ENCODE measurements at regions of chr12 and their contacts with region 1.

Region 1: GRCh38 chr12:113239811-113240331 is 18.6 kb downstream of the TPCN1 start:
- DNase-seq: peak; percentile 82
- H3K4me3 ChIP-seq: peak overlapping the region in 1 of 4 donors; percentile 13
- H3K27ac ChIP-seq: peak overlapping the region; percentile 92 to 95 (median 93)
- H3K4me1 ChIP-seq: peaks cover 38 to 99% (median 86%) of the 10 kb centered on the region in 4 donors
- H3K27me3 ChIP-seq: no peaks in the 10 kb centered on the region
- CTCF ChIP-seq: no peak
- EP300 ChIP-seq: peak; percentile 23
- POLR2A ChIP-seq: peak; percentile 79

Region 2: GRCh38 chr12:112988224-112988623 is 251.6 kb before region 1 on chr12:
- in situ Hi-C with region 1: no loop called
- intact Hi-C with region 1: no loop called
- DNase-seq: no peak
- H3K4me3 ChIP-seq: no peak overlapping the region
- H3K27ac ChIP-seq: no peak overlapping the region
- H3K4me1 ChIP-seq: peaks cover 0 to 3% (median 0%) of the 10 kb centered on the region in 4 donors
- H3K27me3 ChIP-seq: no peaks in the 10 kb centered on the region
- CTCF ChIP-seq: no peak
- EP300 ChIP-seq: no peak
- POLR2A ChIP-seq: no peak

Region 3: GRCh38 chr12:113130457-113131135 is 109.3 kb before region 1 on chr12:
- in situ Hi-C with region 1: no loop called
- intact Hi-C with region 1: no loop called
- DNase-seq: no peak
- H3K4me3 ChIP-seq: no peak overlapping the region
- H3K27ac ChIP-seq: no peak overlapping the region
- H3K4me1 ChIP-seq: peaks cover 0 to 5% (median 1%) of the 10 kb centered on the region in 4 donors
- H3K27me3 ChIP-seq: peaks cover 5% of the 10 kb centered on the region
- CTCF ChIP-seq: no peak
- EP300 ChIP-seq: no peak
- POLR2A ChIP-seq: no peak

Region 4: DNA sequence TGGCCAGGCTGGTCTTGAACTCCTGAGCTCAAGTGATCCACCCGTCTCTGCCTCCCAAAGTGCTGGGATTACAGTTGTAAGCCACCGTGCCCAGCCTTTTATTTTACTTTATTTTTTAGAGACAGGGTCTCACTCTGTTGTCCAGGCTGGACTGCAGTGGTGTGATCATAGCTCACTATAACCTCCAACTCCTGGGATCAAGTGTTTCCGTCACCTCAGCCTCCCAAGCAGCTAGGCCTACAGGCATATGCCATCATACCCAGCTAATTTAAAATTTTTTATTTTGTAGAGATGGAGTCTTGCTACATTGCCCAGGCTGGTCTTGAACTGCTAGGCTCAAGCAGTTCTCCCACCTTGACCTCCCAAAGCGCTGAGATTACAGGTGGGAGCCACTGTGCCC is 14.9 kb before region 1 on chr12:
- in situ Hi-C with region 1: no loop called
- intact Hi-C with region 1: loop called (anchors 2 kb)
- DNase-seq: no peak
- H3K4me3 ChIP-seq: no peak overlapping the region
- H3K27ac ChIP-seq: peak overlapping the region in 3 of 4 donors; percentile 93 to 99 (median 97)
- H3K4me1 ChIP-seq: peaks cover 21 to 59% (median 35%) of the 10 kb centered on the region in 4 donors
- H3K27me3 ChIP-seq: no peaks in the 10 kb centered on the region
- CTCF ChIP-seq: no peak
- EP300 ChIP-seq: no peak
- POLR2A ChIP-seq: no peak

Measured in transverse colon (tissue), 4 donors.